Caco-2 (cell line): ENCODE measurements at regions of chr3 and their contacts with region 1.

Region 1: GRCh38 chr3:157532529-157533297 is 29.5 kb upstream of the VEPH1 start:
- DNase-seq: peak in 1 of 2 experiments; percentile 58
- H3K4me3 ChIP-seq: no peak overlapping the region
- H3K4me3 Mint-ChIP-seq: no peak overlapping the region
- H3K27ac Mint-ChIP-seq: no peak overlapping the region
- H3K4me1 ChIP-seq: no peaks in the 10 kb centered on the region
- H3K4me1 Mint-ChIP-seq: no peaks in the 10 kb centered on the region
- H3K27me3 ChIP-seq: no peaks in the 10 kb centered on the region
- H3K27me3 Mint-ChIP-seq: peaks cover 6% of the 10 kb centered on the region
- CTCF ChIP-seq: peak; percentile 65 to 77

Region 2: GRCh38 chr3:157572559-157573270 is 40.0 kb after region 1 on chr3:
- CTCF ChIA-PET with region 1: interaction called, 54 read pairs
- POLR2A ChIA-PET with region 1: no interaction called
- intact Hi-C with region 1: loop called (anchors 1 kb)
- DNase-seq: peak; percentile 48 to 71
- H3K4me3 ChIP-seq: no peak overlapping the region
- H3K4me3 Mint-ChIP-seq: no peak overlapping the region
- H3K27ac Mint-ChIP-seq: no peak overlapping the region
- H3K4me1 ChIP-seq: 0 out of 2 replicates have a peak, but pooled peaks cover 3% of the 10 kb centered on the region
- H3K4me1 Mint-ChIP-seq: peaks cover 11% of the 10 kb centered on the region
- H3K27me3 ChIP-seq: no peaks in the 10 kb centered on the region
- H3K27me3 Mint-ChIP-seq: peaks cover 2% of the 10 kb centered on the region
- CTCF ChIP-seq: peak; percentile 78 to 88